Left cardiac atrium (tissue), 4 donors: ENCODE measurements at regions of chr5 and their contacts with region 1.

Region 1: DNA sequence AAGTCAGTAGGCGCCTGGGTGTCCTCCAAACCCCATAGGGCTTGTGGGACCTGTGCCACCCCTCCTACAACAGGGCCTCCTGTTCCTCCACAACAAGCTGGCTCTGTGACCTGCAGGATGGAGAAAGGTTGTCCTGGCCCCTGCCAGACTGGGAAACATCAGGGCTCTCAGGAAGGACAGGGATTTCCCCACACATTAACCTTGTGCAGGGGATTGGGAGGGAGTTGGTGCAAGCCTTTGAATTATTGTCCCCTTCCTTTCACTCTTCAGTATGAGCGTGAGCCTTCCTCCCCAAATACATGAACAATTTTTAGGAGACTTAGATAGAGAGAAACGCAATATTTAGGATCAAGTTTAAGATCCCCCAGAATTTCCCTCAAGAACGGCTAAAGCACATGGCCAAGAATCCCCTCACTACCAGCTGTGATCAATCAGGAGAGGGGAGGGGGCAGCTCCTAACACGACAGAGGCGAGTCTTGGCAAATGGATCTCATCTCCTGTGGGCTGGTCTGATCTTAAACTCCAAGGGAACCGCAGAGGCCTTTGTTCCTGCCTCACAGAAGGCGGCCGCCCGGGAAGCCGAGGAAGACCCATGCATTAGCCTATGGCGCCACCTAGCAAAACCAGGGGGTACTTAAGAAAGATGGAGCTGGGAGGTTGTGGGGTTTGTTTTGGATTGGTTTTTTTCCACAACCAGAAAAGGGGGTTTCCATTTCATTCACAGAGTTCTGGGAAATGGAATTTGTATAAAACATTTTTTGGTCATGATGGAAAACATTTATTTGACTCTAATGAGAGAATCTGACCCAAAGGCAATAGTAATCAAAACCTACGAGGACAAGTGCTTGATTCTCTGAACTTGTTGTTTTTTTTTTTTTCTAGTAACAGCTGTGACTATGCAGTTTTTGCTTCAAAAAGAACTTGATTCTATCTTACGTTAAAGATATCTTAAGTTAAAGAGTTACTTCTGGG is 36.1 kb upstream of the OSMR start:
- DNase-seq: peak; percentile 87
- ATAC-seq: peak; percentile 90

Region 2: DNA sequence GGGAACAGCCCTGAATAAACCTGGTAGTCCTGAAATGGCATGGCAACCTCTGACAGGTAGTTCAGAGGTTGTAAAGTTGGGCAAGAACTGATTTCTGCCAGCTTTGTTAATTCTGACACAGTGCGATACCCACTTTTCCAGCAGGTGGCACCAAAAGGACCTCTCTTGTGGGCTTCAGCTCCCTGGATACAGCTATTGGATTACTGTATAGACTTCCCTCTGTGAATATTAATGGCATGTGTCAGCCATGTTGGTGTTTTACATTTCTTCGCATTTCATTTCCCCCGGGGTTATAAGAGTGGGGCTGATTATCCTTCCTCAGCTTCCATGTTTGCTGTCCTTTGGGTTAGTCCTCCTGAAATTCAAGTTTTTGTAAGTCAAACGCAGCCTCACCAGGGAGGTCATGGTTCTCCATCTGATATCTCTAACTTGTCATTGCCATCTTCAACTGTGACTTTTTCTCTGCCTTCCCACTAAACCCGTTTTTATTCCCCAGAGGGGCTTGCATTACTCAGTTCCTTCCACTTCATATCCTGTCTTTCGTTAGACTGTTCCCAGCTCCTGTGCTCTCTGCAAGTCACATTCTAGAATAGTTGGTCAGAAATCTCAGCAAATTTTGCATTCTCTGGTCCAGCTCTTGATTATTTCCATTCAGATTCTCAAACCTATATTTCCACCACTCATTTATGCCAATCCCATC is 388.8 kb before region 1 on chr5:
- intact Hi-C with region 1: loop called in 1 of 2 experiments (anchors 5 kb)
- DNase-seq: peak; percentile 58
- ATAC-seq: peak; percentile 67 to 71

Region 3: GRCh38 chr5:38441453-38442246 is 368.0 kb before region 1 on chr5:
- intact Hi-C with region 1: loop called (anchors 2 to 5 kb)
- DNase-seq: peak; percentile 88
- ATAC-seq: peak; percentile 91 to 95

Region 4: DNA sequence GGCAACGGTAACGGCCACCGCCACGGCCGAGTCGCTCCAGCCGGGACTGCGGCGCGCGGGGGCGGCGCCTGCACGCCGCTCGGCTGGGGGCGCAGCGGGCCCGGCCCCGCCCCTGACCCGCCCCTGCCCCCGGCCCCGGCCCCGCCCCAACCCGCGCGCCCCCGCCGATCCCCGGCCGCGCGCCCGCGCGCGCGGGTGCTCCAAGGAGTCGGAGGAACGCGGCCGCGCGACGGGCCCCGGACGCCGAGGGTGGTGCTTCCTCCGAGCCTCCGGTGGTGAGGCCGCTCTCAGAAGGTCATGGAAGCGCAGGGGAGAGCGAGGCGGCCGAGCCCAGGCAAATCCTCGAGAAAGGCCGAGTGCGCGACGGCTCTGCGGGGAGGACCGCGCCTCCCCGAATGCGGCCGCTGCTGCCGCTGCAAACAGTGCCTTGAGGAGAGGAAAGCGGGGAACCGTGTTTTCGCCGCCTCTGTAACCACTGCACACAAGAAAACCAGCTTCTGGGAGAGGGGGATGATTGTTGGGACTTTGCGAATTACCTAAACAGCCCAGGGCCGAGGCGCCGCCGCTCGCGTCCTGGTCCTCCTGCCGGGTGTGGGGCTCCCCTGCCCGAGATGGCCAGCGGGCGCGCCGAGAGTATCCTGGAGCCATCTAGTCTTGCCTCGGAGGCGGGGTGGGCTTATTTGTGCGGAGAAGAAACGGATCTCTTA is 252.9 kb before region 1 on chr5 and contains the start of gene LIFR:
- intact Hi-C with region 1: loop called in 1 of 2 experiments (anchors 10 kb)
- DNase-seq: peak; percentile 87
- ATAC-seq: peak; percentile 93 to 95
- total RNA-seq, gene LIFR: 59.7 to 68.9 TPM

Region 5: DNA sequence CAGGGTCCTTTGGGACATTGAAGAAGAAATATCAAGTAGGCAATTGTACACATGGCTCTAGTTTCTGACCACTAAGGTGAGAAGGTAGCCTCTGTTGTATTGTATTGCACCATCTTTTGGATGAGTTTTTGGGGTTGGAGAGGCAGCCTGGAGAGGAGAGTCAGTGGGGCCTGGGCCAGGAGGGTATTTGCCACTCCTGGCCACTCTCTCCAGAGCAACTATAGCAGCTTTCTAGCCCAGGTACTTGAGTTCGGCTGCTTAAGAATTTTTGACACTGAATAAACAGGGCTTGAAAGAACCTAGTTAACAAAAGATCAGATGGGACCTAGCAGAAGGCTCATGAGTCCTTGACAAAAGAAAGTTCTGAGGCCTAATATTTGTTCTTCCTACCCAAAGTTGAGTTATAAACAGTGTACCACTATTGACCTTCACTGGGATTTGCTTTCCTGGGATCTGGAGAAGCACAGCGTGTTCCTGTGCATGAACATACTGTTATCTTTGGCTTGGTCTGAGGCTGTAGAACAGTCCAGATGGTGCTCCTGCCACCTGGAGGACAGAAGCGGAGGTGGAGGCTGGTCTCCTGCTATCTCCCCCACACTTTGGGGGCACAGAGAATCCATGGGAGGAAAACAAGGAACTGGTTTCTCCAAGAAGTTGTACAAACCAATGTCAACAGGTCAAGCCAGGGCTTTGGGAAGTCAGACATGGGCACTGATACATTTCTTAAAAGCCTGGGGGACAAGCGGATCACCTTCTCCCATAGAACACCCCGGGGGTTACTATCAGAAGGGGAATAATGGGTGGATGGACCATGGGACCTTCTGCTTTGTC is 142.8 kb before region 1 on chr5:
- intact Hi-C with region 1: loop called (anchors 5 to 10 kb)
- DNase-seq: peak; percentile 49
- ATAC-seq: peak; percentile 94 to 96

Region 6: DNA sequence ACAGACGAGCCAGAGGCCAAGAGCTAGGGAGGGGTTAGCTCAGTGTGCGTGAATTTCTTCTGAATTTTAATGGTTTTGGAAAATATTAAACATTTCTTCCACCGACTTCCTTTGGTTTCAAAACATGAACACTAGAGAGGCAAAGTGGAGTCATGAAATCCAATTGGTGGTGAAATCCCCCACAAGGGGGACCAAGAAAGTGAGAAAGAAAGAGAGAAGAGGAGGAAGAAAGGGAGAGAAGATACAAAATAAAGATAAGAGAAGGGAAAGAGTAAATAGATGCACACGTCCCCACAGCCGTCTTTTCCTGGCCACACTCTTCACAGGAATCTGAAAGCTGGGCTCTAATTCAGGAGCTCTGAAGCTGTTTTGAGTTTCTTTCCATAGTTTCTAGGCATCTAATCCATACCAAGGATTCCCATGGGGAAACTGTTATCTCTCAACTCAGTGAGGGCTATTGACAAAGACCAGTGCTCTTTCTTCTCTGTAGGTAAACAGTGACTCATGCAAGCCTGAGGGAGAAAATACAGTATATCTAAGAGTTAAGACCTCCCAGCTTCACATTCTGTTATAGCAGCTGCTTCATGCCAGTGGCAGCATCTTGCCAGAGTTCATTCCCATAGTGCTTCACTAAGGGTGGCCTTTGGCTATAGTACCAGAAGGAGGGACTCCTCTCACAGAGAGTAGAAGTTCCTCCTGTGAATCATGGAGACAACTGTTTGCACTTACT is 137.4 kb before region 1 on chr5:
- intact Hi-C with region 1: loop called (anchors 5 to 10 kb)
- DNase-seq: no peak
- ATAC-seq: no peak

Region 7: GRCh38 chr5:38871790-38872551 is 62.3 kb after region 1 on chr5:
- intact Hi-C with region 1: no loop called
- DNase-seq: no peak
- ATAC-seq: peak; percentile 85 to 98

Region 8: GRCh38 chr5:38953426-38953825 is 143.8 kb after region 1 on chr5:
- intact Hi-C with region 1: no loop called
- DNase-seq: no peak
- ATAC-seq: no peak